Mammary epithelial cell (primary cell): ENCODE measurements at regions of chr5 and their contacts with region 1.

Region 1: DNA sequence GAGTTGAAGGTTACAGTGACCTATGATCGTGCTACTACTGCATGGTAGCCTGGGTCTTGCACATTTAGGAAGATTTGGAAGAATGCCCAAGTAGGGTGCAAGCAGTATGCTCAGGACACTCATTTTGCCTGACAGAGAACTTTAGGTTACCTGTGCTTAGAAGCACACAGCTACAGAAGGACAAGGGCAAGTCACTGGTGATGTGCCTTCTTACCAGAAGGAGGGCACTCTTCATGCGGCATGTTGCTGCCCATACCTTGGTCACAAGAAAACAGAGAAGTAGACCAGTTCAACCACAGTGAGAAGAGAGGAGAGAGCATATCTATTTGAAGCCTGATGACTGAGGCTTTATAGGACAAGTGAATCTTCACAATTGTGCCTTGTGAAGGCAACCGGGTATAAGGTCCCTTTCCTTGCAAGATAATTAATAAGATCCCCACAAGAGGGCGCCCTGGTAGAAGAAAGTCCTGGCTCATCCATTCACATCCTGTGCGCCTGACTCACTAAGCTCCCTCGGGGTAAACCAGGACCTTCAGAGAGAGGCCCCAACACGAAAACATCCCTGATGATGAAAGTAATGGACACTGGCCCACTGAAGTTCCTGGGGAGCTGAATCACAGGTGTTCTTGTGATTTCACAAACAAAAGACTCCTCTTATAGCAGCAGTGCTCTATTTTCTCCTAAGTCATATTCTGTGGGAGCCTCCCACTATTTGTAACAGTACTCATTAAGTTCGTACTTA is 38.1 kb upstream of the STARD4 start:
- DNase-seq: peak; percentile 98
- H3K4me3 ChIP-seq: no peak overlapping the region
- H3K27ac ChIP-seq: peak overlapping the region; percentile 73
- H3K4me1 ChIP-seq: peaks cover 13% of the 10 kb centered on the region
- H3K27me3 ChIP-seq: no peaks in the 10 kb centered on the region
- CTCF ChIP-seq: peak; percentile 45 to 51

Region 2: GRCh38 chr5:111411301-111411700 is 139.1 kb before region 1 on chr5:
- CTCF ChIA-PET with region 1: no interaction called
- dilution Hi-C with region 1: no loop called
- in situ Hi-C with region 1: no loop called
- intact Hi-C with region 1: no loop called
- DNase-seq: peak; percentile 66
- H3K4me3 ChIP-seq: no peak overlapping the region
- H3K27ac ChIP-seq: no peak overlapping the region
- H3K4me1 ChIP-seq: peaks cover 10% of the 10 kb centered on the region
- H3K27me3 ChIP-seq: no peaks in the 10 kb centered on the region
- CTCF ChIP-seq: no peak

Region 3: GRCh38 chr5:111535879-111536549 is 14.4 kb before region 1 on chr5:
- CTCF ChIA-PET with region 1: interaction called, 3 read pairs
- dilution Hi-C with region 1: no loop called
- in situ Hi-C with region 1: no loop called
- intact Hi-C with region 1: loop called (anchors 2 kb)
- DNase-seq: no peak
- H3K4me3 ChIP-seq: no peak overlapping the region
- H3K27ac ChIP-seq: no peak overlapping the region
- H3K4me1 ChIP-seq: no peaks in the 10 kb centered on the region
- H3K27me3 ChIP-seq: no peaks in the 10 kb centered on the region
- CTCF ChIP-seq: no peak

Region 4: GRCh38 chr5:111685971-111686370 is 135.5 kb after region 1 on chr5:
- CTCF ChIA-PET with region 1: no interaction called
- dilution Hi-C with region 1: no loop called
- in situ Hi-C with region 1: no loop called
- intact Hi-C with region 1: loop called (anchors 1 kb)
- DNase-seq: no peak
- H3K4me3 ChIP-seq: no peak overlapping the region
- H3K27ac ChIP-seq: no peak overlapping the region
- H3K4me1 ChIP-seq: peaks cover 9% of the 10 kb centered on the region
- H3K27me3 ChIP-seq: no peaks in the 10 kb centered on the region
- CTCF ChIP-seq: peak; percentile 32 to 34

Region 5: GRCh38 chr5:111820072-111820471 is 269.6 kb after region 1 on chr5:
- CTCF ChIA-PET with region 1: interaction called, 13 read pairs
- dilution Hi-C with region 1: no loop called
- in situ Hi-C with region 1: no loop called
- intact Hi-C with region 1: no loop called
- DNase-seq: no peak
- H3K4me3 ChIP-seq: no peak overlapping the region
- H3K27ac ChIP-seq: no peak overlapping the region
- H3K4me1 ChIP-seq: no peaks in the 10 kb centered on the region
- H3K27me3 ChIP-seq: peaks cover 6% of the 10 kb centered on the region
- CTCF ChIP-seq: no peak

Region 6: GRCh38 chr5:112004867-112005622 is 454.6 kb after region 1 on chr5:
- CTCF ChIA-PET with region 1: no interaction called
- dilution Hi-C with region 1: no loop called
- in situ Hi-C with region 1: no loop called
- intact Hi-C with region 1: loop called (anchors 10 kb)
- DNase-seq: peak; percentile 50
- H3K4me3 ChIP-seq: no peak overlapping the region
- H3K27ac ChIP-seq: no peak overlapping the region
- H3K4me1 ChIP-seq: peaks cover 17% of the 10 kb centered on the region
- H3K27me3 ChIP-seq: no peaks in the 10 kb centered on the region
- CTCF ChIP-seq: no peak